ENCODE measurements at regions of chr20 and their contacts with region 1.

Region 1: GRCh38 chr20:50189681-50190582 is 698 bp upstream of the CEBPB start:
- DNase-seq: peak in 1 of 2 donors; percentile 94
- H3K4me3 ChIP-seq: peak overlapping the region; percentile 99
- H3K27ac ChIP-seq: peak overlapping the region; percentile 99 to 100
- H3K4me1 ChIP-seq: peaks cover 11 to 17% of the 10 kb centered on the region in 2 donors
- H3K27me3 ChIP-seq: no peaks in the 10 kb centered on the region
- CTCF ChIP-seq: peak; percentile 83 to 95 (median 95)

Region 2: GRCh38 chr20:49372095-49372726 is 817.7 kb before region 1 on chr20:
- intact Hi-C with region 1: no loop called
- DNase-seq: no peak
- H3K4me3 ChIP-seq: no peak overlapping the region
- H3K27ac ChIP-seq: no peak overlapping the region
- H3K4me1 ChIP-seq: no peaks in the 10 kb centered on the region
- H3K27me3 ChIP-seq: no peaks in the 10 kb centered on the region
- CTCF ChIP-seq: no peak

Region 3: DNA sequence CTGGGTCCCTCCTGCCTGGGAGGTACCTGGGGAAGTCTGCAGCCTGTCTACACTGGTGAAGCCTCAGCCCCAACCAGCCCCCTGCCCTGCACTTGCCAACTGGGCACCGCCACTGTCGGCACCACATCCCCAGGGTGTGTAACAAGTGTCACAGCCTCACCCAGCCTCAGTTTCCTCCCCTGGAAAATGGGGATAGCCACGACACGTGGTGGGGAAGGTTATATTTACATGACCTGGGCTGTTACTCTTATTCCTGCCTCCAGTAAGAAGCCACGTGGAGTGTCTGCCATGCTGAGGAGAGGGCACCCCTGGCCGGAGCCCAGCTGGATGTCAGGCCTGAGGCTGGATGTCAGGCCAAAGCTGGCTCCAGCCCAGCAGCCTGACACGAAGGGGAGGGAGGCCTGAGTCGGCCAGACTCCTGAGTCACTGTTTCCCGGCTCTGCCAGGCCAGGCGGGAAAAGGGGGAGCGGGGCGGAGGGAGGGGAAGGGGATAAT is 162.3 kb before region 1 on chr20:
- intact Hi-C with region 1: no loop called
- DNase-seq: peak; percentile 74 to 94
- H3K4me3 ChIP-seq: no peak overlapping the region
- H3K27ac ChIP-seq: peak overlapping the region; percentile 82 to 89
- H3K4me1 ChIP-seq: peaks cover 14 to 36% of the 10 kb centered on the region in 2 donors
- H3K27me3 ChIP-seq: no peaks in the 10 kb centered on the region
- CTCF ChIP-seq: no peak

Region 4: GRCh38 chr20:50085452-50086365 is 104.2 kb before region 1 on chr20:
- intact Hi-C with region 1: no loop called
- DNase-seq: peak in 1 of 2 donors; percentile 66
- H3K4me3 ChIP-seq: peak overlapping the region in 1 of 2 donors; percentile 16
- H3K27ac ChIP-seq: peak overlapping the region in 1 of 2 donors; percentile 9
- H3K4me1 ChIP-seq: peaks cover 4 to 7% of the 10 kb centered on the region in 2 donors
- H3K27me3 ChIP-seq: no peaks in the 10 kb centered on the region
- CTCF ChIP-seq: peak; percentile 61 to 81 (median 74)

Region 5: DNA sequence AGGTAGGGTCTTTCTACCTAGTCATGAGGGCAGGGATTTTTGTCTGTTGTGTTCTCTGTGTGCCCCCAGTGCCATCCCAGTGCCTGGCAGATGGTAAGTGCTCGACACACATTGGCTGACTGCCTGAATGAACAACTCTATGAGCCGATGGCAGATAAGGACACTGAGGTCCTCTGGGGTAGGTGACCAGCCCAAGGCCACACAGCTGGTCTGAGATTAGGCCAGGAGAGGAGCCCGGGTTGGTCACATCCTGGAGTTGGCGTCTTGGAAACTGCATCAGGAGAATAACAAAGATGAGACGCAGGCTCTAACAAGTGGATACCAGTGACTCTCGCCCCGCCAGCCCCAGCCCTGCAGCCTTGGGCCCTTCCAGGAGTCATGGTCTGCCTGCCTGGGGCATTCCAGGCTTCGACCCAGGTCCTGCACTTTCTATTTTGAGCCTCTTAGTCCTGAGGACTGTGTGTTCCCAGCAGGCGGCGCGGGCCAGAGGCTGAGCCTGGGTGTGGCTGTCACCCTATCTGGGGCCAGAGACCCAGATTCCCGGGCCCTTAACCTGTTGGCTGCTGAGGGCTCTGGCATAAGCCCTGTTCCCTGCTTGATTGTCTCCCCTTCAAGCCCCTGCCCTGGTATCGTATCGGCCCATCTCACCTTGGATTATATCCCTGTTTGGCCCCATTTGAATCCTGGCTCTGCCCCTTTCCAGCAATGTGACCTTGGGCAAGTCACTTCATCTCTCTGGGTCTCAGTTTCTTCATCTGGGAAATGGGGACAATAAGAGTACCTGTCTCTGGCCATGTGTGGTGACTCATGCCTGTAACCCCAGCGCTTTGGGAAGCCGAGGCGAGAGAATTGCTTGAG is 89.0 kb after region 1 on chr20:
- intact Hi-C with region 1: loop called (anchors 2 kb)
- DNase-seq: peak in 1 of 2 donors; percentile 90
- H3K4me3 ChIP-seq: no peak overlapping the region
- H3K27ac ChIP-seq: peak overlapping the region; percentile 58
- H3K4me1 ChIP-seq: peaks cover 4 to 14% of the 10 kb centered on the region in 2 donors
- H3K27me3 ChIP-seq: no peaks in the 10 kb centered on the region
- CTCF ChIP-seq: peak; percentile 33 to 48 (median 43)

Region 6: GRCh38 chr20:50320910-50321796 is 131.2 kb after region 1 on chr20:
- intact Hi-C with region 1: loop called (anchors 5 kb)
- DNase-seq: peak; percentile 87 to 97
- H3K4me3 ChIP-seq: peak overlapping the region; percentile 12 to 32
- H3K27ac ChIP-seq: peak overlapping the region; percentile 67 to 80
- H3K4me1 ChIP-seq: peaks cover 6 to 17% of the 10 kb centered on the region in 2 donors
- H3K27me3 ChIP-seq: no peaks in the 10 kb centered on the region
- CTCF ChIP-seq: no peak

Region 7: DNA sequence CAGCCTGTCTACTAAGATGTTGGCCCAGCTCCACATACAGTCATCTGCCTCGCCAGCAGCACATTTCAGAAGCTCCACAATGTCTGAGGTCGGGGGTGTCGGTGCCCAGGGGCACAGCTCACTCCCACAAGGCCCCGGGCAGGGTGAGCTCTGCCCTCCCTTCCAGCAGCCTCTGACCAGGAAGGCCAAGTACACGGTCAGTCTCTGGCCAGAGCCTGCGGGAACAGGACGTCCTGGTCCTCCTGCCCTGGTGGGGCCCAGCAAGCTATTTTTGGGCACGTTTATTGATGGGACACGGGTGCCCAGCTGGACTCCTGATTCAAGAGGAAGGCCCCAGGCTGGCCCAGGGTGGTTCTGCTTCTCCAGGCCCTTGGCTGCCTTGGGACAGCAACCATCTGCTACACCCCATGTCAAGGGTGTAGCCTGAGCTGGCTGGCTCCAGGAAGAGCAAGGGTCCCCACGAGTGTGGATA is 205.4 kb after region 1 on chr20:
- intact Hi-C with region 1: loop called (anchors 1 kb)
- DNase-seq: peak; percentile 93 to 98
- H3K4me3 ChIP-seq: no peak overlapping the region
- H3K27ac ChIP-seq: peak overlapping the region; percentile 90 to 97
- H3K4me1 ChIP-seq: peaks cover 30 to 56% of the 10 kb centered on the region in 2 donors
- H3K27me3 ChIP-seq: no peaks in the 10 kb centered on the region
- CTCF ChIP-seq: no peak

Region 8: DNA sequence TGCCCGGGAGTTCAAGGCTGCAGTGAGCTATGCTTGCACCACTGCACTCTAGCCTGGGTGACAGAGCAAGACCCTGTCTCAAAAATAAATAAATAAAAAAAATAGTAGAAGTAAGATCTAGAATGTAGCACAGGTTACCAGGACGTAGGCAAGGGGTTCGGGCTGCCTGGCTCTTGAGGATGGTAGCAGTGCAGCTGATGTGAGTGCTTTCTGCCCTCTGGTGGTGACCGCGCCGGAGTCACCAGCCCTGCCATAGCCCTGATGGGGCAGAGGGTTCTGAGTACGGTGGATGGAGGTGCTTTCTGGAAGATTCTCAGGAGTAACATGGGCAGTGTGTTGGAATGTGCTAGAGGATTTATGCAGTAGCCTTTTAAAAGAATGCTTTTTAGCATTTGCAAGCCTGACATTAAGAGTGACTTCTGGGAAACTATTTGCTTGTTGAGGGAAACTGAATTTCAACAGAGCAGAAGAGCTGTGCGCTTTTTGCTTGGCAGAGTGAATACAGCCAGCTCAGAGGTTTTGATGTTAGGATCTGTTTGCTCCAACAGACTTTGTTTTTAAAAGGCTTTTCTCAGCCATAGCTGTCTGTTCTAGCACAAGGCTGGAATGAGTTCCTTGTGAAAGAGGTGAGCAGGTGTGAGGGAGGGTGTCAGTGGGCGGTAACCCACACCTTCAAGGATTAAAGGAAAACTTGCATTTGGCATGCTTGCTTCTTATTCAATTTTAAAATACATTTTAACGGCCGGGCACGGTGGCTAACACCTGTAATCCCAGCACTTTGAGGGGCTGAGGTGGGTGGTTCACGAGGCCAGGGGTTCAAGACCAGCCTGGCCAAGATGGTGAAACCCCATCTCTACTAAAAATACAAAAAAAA is 386.2 kb after region 1 on chr20:
- intact Hi-C with region 1: loop called (anchors 2 kb)
- DNase-seq: peak in 1 of 2 donors; percentile 78
- H3K4me3 ChIP-seq: no peak overlapping the region
- H3K27ac ChIP-seq: peak overlapping the region in 1 of 2 donors; percentile 38
- H3K4me1 ChIP-seq: peaks cover 12 to 23% of the 10 kb centered on the region in 2 donors
- H3K27me3 ChIP-seq: no peaks in the 10 kb centered on the region
- CTCF ChIP-seq: peak; percentile 45 to 75 (median 65)

Region 9: DNA sequence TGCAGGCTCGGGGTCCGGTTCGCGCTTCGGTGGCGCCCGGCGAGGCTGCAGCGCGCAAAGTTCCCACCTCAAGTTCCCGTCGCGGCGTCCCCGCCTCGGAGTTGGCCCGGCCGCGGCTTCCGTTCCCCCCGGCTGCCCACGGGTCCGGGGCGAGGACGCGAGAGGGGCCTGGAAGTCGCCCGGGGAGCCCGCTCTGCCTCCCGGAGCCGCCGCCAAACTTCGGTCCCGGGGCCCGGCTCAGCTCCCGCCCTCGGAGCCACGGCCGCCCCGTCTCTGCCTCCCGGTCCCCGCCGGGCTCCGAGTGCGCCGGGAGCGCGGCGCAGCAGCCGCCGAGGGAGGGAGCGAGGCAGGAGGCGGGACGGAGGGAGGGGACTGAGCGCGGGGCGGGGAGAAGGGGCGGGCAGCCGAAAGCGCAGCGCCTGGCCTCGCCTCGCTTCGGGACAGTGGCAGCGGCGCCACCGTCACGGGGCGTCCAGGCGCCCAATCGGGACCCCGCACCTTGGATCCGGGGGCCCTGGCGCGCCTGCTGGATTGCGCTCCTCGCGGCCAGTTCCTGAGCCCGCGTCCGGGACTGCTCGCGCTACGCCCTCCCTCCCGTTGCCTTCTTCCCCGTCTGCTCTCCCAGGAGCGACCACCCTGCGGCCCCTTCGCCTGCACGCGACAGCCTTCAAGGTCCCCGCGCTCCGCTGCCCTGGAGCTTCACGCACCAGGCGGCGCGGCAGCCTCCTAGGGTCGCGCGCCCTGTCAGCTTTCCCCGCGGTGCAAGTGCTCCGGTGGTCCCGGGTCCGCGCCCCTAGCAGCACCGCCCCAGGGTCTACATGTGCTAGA is 833.1 kb after region 1 on chr20 and contains the start of gene KCNG1:
- intact Hi-C with region 1: no loop called
- DNase-seq: no peak
- H3K4me3 ChIP-seq: peak within 1 kb of the TSS; percentile 45 to 63
- H3K27ac ChIP-seq: no peak within 1 kb of the TSS
- H3K4me1 ChIP-seq: peaks cover 0 to 4% of the 10 kb centered on the region in 2 donors
- H3K27me3 ChIP-seq: peaks cover 11% of the 10 kb centered on the region
- CTCF ChIP-seq: no peak
- total RNA-seq, gene KCNG1: 6.6 TPM

Measured in ascending aorta (tissue), 2 donors.